CD4-positive, alpha-beta memory T cell (primary cell): ENCODE measurements at regions of chr1 and their contacts with region 1.

Region 1: DNA sequence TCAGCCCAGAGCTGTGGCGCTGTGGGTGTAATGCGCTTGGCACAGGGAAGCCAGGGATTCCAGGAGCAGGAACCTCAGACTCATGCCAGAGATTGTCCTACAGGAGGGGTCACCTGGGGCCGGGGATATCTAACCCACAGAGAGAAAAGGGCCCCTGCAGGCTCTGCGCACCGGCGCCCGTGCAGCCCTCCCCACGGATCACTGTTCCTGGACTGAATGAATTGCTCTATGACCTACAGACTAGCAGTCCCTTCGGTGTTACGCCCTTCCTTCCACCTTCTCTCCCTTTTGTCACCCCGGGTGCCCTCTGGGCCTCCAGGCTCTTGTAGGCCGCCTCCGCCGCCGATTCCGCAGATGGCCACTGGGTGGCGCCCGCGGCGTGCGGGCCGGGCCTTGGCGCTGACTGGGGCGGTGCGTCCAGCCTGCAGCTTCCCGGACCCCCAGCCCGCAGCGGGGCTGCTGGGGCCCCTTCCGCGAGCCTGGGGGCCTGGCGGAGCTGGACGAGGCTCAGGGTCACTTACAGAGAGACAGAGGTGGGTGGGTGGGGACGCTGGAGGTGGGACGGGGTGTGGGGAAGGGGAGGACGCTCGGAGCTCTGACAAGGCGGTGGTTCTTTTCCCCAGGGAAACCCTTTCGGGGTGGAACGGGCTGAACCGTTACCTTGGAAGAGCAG is 101.3 kb downstream of the IER5 start:
- DNase-seq: peak; percentile 50 to 82 (median 71)
- H3K4me3 ChIP-seq: no peak overlapping the region
- H3K4me3 Mint-ChIP-seq: peak overlapping the region in 5 of 8 donors; percentile 21 to 50 (median 39)
- H3K27ac ChIP-seq: no peak overlapping the region
- H3K27ac Mint-ChIP-seq: peak overlapping the region in 1 of 7 donors; percentile 48
- H3K4me1 ChIP-seq: no peaks in the 10 kb centered on the region
- H3K4me1 Mint-ChIP-seq: peaks cover 0 to 4% (median 3%) of the 10 kb centered on the region in 4 donors
- H3K27me3 ChIP-seq: no peaks in the 10 kb centered on the region
- H3K27me3 Mint-ChIP-seq: peaks cover 1 to 16% of the 10 kb centered on the region in 2 donors

Region 2: DNA sequence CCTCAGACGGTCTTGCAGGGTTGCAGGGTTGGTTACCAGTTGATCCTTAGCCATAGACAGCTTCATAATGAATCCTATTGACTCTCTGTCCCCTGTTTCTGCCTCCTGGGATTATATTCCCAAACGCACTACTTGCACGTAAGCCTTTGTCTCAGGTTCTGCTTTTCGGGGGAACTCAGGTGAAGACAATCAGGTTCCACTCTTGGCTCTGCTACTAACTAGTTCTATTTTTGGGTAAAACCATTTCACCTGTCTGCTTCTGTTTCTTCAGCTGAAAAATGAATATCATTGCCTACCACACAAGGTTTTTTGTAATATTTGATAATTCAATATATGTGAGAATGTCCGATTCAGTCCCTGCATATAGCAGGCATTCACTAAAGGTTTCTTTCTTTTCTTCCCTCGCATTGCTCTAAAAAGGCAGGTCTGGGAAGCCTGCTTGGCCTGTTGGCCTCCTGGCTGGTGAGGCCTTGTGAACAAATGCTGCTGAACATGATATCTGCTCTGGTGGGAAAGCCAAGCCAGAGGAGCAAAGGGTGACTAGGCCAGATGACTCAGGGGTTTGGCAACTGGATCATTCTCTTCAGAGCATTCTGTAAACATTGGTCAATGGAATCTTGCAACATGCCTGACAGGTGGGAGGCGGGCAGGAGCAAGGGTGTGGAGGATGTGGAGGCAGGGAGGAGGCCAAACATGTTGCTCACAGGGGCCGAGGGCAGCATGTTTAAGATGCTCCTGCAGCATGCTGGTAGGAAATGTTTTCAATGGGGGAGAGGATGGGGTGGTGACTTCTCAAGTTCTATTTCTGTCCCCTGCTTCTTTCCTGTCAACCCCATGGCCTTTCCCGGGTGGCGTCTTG is 77.5 kb before region 1 on chr1:
- CTCF ChIA-PET with region 1: no interaction called
- POLR2A ChIA-PET with region 1: no interaction called
- intact Hi-C with region 1: no loop called
- DNase-seq: no peak
- H3K4me3 ChIP-seq: no peak overlapping the region
- H3K4me3 Mint-ChIP-seq: no peak overlapping the region
- H3K27ac ChIP-seq: no peak overlapping the region
- H3K27ac Mint-ChIP-seq: peak overlapping the region in 1 of 7 donors; percentile 31
- H3K4me1 ChIP-seq: no peaks in the 10 kb centered on the region
- H3K4me1 Mint-ChIP-seq: peaks cover 2 to 12% (median 5%) of the 10 kb centered on the region in 4 donors
- H3K27me3 ChIP-seq: no peaks in the 10 kb centered on the region
- H3K27me3 Mint-ChIP-seq: no peaks in the 10 kb centered on the region

Region 3: GRCh38 chr1:181202986-181203555 is 13.2 kb after region 1 on chr1:
- CTCF ChIA-PET with region 1: interaction called, 13 read pairs
- POLR2A ChIA-PET with region 1: no interaction called
- intact Hi-C with region 1: no loop called
- DNase-seq: no peak
- H3K4me3 ChIP-seq: no peak overlapping the region
- H3K4me3 Mint-ChIP-seq: no peak overlapping the region
- H3K27ac ChIP-seq: no peak overlapping the region
- H3K27ac Mint-ChIP-seq: no peak overlapping the region
- H3K4me1 ChIP-seq: no peaks in the 10 kb centered on the region
- H3K4me1 Mint-ChIP-seq: no peaks in the 10 kb centered on the region
- H3K27me3 ChIP-seq: no peaks in the 10 kb centered on the region
- H3K27me3 Mint-ChIP-seq: peaks cover 5 to 6% of the 10 kb centered on the region in 2 donors

Region 4: GRCh38 chr1:181397845-181398244 is 208.0 kb after region 1 on chr1:
- CTCF ChIA-PET with region 1: interaction called, 14 read pairs
- POLR2A ChIA-PET with region 1: no interaction called
- intact Hi-C with region 1: no loop called
- DNase-seq: peak; percentile 41 to 56 (median 50)
- H3K4me3 ChIP-seq: peak overlapping the region; percentile 13 to 25
- H3K4me3 Mint-ChIP-seq: peak overlapping the region; percentile 65 to 86 (median 74)
- H3K27ac ChIP-seq: peak overlapping the region; percentile 37
- H3K27ac Mint-ChIP-seq: peak overlapping the region in 5 of 7 donors; percentile 78 to 97 (median 95)
- H3K4me1 ChIP-seq: peaks cover 64% of the 10 kb centered on the region
- H3K4me1 Mint-ChIP-seq: peaks cover 9 to 35% (median 29%) of the 10 kb centered on the region in 4 donors
- H3K27me3 ChIP-seq: no peaks in the 10 kb centered on the region
- H3K27me3 Mint-ChIP-seq: no peaks in the 10 kb centered on the region

Region 5: DNA sequence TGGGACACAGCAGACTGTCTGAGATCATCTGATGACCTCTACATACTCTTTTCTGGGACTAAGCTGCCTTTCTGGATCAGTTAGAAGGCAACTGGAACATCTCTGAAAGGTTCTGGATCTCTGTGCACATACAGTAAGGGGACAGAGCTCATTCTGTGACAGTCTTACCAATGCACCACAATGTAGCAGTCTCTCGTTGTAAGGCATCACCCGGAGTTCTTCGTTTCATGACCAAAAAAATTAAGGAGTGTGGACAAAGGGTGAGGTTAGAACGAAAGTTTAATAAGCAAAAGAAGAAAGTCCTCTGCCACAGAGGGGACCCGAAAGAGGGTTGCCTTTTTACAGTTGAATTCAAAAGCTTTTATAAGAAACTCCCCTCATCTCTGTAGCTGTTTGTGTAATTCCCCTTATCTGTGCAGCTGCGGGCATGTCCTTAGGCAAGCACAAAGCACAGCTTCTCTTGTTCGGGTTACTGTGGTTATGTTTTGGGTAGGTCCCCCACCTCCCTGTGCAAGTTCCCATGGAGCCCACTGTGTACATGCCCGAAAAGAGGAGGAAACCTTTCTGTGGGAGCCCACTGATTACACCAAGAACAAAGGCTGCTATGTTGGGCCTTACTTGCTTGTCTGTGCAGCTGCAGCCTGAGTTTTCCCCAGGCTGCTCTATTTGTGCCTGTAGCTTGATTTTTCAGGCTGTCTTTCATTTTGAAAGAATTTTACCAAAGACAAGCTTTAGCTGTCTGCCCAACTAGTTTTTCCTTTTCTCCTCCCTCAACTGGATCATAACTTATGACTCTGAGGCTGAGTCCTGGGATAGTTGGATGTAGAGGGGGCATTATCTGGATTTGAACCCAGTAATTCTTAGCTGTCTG is 240.4 kb after region 1 on chr1:
- CTCF ChIA-PET with region 1: interaction called, 110 read pairs
- POLR2A ChIA-PET with region 1: interaction called, 4 read pairs
- intact Hi-C with region 1: loop called (anchors 1 kb)
- DNase-seq: no peak
- H3K4me3 ChIP-seq: no peak overlapping the region
- H3K4me3 Mint-ChIP-seq: no peak overlapping the region
- H3K27ac ChIP-seq: no peak overlapping the region
- H3K27ac Mint-ChIP-seq: peak overlapping the region in 1 of 7 donors; percentile 5
- H3K4me1 ChIP-seq: no peaks in the 10 kb centered on the region
- H3K4me1 Mint-ChIP-seq: peaks cover 0 to under 1% (median 0%) of the 10 kb centered on the region in 4 donors
- H3K27me3 ChIP-seq: no peaks in the 10 kb centered on the region
- H3K27me3 Mint-ChIP-seq: peaks cover 18 to 22% of the 10 kb centered on the region in 2 donors